Natural killer cell (primary cell): ENCODE measurements at regions of chr22 and their contacts with region 1.

Region 1: GRCh38 chr22:17785185-17786184 is 11.2 kb upstream of the BID start:
- DNase-seq: peak; percentile 61 to 83
- ATAC-seq: peak; percentile 23 to 54 (median 38)
- H3K4me3 ChIP-seq: no peak overlapping the region
- H3K4me3 Mint-ChIP-seq: no peak overlapping the region
- H3K27ac ChIP-seq: no peak overlapping the region
- H3K27ac Mint-ChIP-seq: no peak overlapping the region
- H3K4me1 ChIP-seq: peaks cover 45% of the 10 kb centered on the region
- H3K4me1 Mint-ChIP-seq: peaks cover 20 to 33% of the 10 kb centered on the region in 2 donors
- H3K27me3 ChIP-seq: no peaks in the 10 kb centered on the region
- H3K27me3 Mint-ChIP-seq: no peaks in the 10 kb centered on the region
- CTCF ChIP-seq: peak; percentile 63

Region 2: GRCh38 chr22:17726464-17727246 is 58.8 kb before region 1 on chr22:
- intact Hi-C with region 1: no loop called
- DNase-seq: peak in 1 of 2 donors; percentile 13
- ATAC-seq: peak in 2 of 3 donors; percentile 29 to 31
- H3K4me3 ChIP-seq: no peak overlapping the region
- H3K4me3 Mint-ChIP-seq: no peak overlapping the region
- H3K27ac ChIP-seq: no peak overlapping the region
- H3K27ac Mint-ChIP-seq: peak overlapping the region; percentile 7 to 77
- H3K4me1 ChIP-seq: peaks cover 9% of the 10 kb centered on the region
- H3K4me1 Mint-ChIP-seq: peaks cover 14 to 16% of the 10 kb centered on the region in 2 donors
- H3K27me3 ChIP-seq: no peaks in the 10 kb centered on the region
- H3K27me3 Mint-ChIP-seq: no peaks in the 10 kb centered on the region
- CTCF ChIP-seq: no peak

Region 3: DNA sequence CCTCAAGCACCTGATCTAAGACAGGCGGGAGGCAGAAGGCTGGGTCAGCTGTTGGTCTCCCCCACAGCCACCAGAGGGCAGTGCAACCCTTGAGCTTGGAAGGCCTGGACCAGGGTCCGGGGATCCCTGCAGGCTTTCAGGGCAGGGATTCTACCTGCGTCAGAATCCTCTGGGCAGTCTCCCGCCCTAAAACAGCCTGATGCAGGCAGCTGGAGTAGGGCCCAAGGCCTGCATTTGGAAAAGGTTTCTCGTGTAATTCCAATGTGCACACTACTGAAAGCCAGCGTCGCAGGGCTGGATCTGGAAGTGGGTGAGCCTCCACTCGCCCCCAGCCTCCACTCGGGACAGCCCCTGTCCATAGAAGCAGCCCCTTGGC is 43.0 kb before region 1 on chr22:
- intact Hi-C with region 1: loop called (anchors 5 kb)
- DNase-seq: peak; percentile 52 to 85
- ATAC-seq: peak; percentile 79 to 96 (median 88)
- H3K4me3 ChIP-seq: no peak overlapping the region
- H3K4me3 Mint-ChIP-seq: no peak overlapping the region
- H3K27ac ChIP-seq: no peak overlapping the region
- H3K27ac Mint-ChIP-seq: peak overlapping the region; percentile 70 to 76
- H3K4me1 ChIP-seq: no peaks in the 10 kb centered on the region
- H3K4me1 Mint-ChIP-seq: peaks cover 6 to 10% of the 10 kb centered on the region in 2 donors
- H3K27me3 ChIP-seq: no peaks in the 10 kb centered on the region
- H3K27me3 Mint-ChIP-seq: no peaks in the 10 kb centered on the region
- CTCF ChIP-seq: peak; percentile 77

Region 4: DNA sequence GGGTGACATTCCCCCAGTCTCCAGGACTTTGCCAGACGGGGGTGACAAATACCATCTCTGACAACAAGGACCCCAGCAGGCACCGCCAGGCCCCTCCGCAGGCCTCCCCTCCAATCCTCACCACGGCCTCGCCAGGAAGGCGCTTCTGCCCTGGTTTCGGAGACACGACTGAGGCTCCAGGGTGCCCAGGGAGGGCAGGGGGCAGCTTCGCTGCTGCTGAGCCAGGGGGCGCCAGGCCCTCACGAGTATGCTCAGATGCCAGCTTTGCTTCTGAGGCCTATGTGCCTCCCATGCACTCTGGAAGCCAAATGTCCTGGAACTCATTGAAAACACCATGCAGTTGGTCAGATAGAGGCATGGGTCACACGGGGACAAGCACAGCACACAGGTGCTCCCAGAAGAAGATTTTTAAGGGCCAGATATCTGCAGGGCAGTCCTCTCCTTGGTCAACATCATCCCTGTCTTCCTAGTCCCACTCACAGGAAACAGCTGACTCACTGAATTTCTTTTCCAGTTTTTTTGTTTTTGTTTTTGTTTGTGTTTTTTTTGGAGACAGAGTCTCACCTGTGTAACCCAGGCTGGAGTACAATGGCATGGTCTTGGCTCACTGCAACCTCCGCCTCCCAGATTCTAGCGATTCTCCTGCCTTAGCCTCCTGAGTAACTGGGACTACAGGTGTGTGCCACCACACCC is 31.1 kb before region 1 on chr22:
- intact Hi-C with region 1: loop called (anchors 1 kb)
- DNase-seq: peak in 1 of 2 donors; percentile 65
- ATAC-seq: peak; percentile 60 to 67 (median 61)
- H3K4me3 ChIP-seq: no peak overlapping the region
- H3K4me3 Mint-ChIP-seq: no peak overlapping the region
- H3K27ac ChIP-seq: no peak overlapping the region
- H3K27ac Mint-ChIP-seq: peak overlapping the region; percentile 36 to 69
- H3K4me1 ChIP-seq: peaks cover 11% of the 10 kb centered on the region
- H3K4me1 Mint-ChIP-seq: peaks cover 20 to 28% of the 10 kb centered on the region in 2 donors
- H3K27me3 ChIP-seq: no peaks in the 10 kb centered on the region
- H3K27me3 Mint-ChIP-seq: no peaks in the 10 kb centered on the region
- CTCF ChIP-seq: peak; percentile 14